ENCODE measurements at regions of chr3 and their contacts with region 1.

Region 1: GRCh38 chr3:15256861-15257341 is 50.9 kb downstream of the CAPN7 start:
- DNase-seq: no peak
- H3K4me3 ChIP-seq: no peak overlapping the region
- H3K27ac ChIP-seq: no peak overlapping the region
- H3K4me1 ChIP-seq: peaks cover 14% of the 10 kb centered on the region
- H3K27me3 ChIP-seq: no peaks in the 10 kb centered on the region
- CTCF ChIP-seq: no peak

Region 2: GRCh38 chr3:15159501-15160136 is 97.3 kb before region 1 on chr3:
- CTCF ChIA-PET with region 1: no interaction called
- dilution Hi-C with region 1: loop called (anchors 5 kb)
- in situ Hi-C with region 1: no loop called
- intact Hi-C with region 1: no loop called
- DNase-seq: no peak
- H3K4me3 ChIP-seq: no peak overlapping the region
- H3K27ac ChIP-seq: no peak overlapping the region
- H3K4me1 ChIP-seq: no peaks in the 10 kb centered on the region
- H3K27me3 ChIP-seq: peaks cover 5% of the 10 kb centered on the region
- CTCF ChIP-seq: no peak